ENCODE measurements at regions of chr4 and their contacts with region 1.

Region 1: DNA sequence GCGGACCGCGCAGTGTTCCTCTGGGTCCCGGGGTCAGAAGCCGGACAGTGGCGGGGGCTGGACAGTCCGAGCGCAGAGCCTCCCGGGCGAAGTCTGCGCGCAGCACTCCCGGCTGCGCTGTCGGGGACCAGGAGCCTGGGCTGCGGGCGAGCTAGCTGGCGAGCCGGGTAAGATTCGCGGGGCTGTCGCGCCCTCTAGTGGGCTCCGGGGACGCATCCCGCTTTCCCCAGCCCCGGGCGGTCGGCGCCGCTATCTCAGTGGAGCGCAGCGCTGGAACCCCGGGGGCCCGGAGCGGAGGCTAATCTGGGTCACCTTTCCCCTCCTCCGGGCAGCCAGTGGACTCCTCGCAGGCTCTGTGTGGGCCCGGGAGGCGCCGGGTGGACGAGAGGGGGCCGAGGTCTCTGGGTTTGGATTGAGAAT is 4.2 kb downstream of the PDGFRA start:
- DNase-seq: peak; percentile 83
- H3K4me3 Mint-ChIP-seq: peak overlapping the region; percentile 70
- H3K27ac Mint-ChIP-seq: no peak overlapping the region
- H3K4me1 Mint-ChIP-seq: peaks cover 11% of the 10 kb centered on the region
- H3K27me3 Mint-ChIP-seq: peaks cover 26% of the 10 kb centered on the region
- CTCF ChIP-seq: peak; percentile 74

Region 2: GRCh38 chr4:52545099-52546069 is 1687.9 kb before region 1 on chr4:
- CTCF ChIA-PET with region 1: interaction called, 4 read pairs
- POLR2A ChIA-PET with region 1: no interaction called
- intact Hi-C with region 1: loop called (anchors 2 kb)
- DNase-seq: peak; percentile 78
- H3K4me3 Mint-ChIP-seq: no peak overlapping the region
- H3K27ac Mint-ChIP-seq: no peak overlapping the region
- H3K4me1 Mint-ChIP-seq: no peaks in the 10 kb centered on the region
- H3K27me3 Mint-ChIP-seq: no peaks in the 10 kb centered on the region
- CTCF ChIP-seq: peak; percentile 89

Region 3: DNA sequence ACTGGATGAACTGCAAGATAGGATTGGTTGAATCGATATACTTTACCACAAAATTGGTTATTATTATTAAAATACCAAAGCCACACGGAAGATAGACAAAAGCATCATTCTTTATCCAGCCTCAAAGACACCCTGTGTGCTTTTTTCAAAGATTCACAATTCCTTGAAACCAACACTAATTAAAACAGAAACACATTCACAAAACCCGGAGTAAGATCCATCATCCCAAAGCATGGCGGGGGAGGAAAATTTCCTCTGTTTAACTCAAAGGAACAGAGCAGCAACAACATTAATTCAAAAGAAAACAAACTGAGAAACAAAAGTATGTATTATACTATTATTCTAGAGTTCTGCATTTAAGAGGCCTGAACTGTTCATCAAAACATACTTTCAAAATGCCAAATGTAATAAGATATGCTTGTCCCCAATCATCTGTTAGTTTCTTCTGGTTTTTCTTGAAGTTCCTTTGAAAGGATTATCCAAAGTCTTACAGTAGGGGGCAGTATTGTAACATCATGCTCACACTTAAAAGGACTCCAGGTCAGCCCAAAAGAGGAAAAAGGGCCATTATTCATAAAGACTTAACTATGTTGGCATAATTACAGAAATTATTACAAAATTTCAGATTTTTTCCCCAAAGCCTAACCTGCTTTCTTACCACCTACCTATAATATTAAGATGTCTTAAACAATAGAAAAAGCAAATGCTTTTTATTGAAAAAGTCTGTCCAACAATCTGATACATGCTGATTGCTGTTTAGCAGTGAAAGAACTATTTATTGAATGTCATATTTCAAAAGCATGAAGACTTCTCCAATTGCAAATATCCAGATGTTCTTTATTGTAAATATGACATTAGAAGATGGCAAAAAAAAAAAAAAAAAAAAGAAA is 1036.2 kb before region 1 on chr4:
- CTCF ChIA-PET with region 1: interaction called, 15 read pairs
- POLR2A ChIA-PET with region 1: no interaction called
- intact Hi-C with region 1: loop called (anchors 1 kb)
- DNase-seq: peak; percentile 79
- H3K4me3 Mint-ChIP-seq: no peak overlapping the region
- H3K27ac Mint-ChIP-seq: no peak overlapping the region
- H3K4me1 Mint-ChIP-seq: no peaks in the 10 kb centered on the region
- H3K27me3 Mint-ChIP-seq: no peaks in the 10 kb centered on the region
- CTCF ChIP-seq: peak; percentile 78

Region 4: GRCh38 chr4:53377319-53378170 is 855.7 kb before region 1 on chr4 and contains the start of gene FIP1L1:
- CTCF ChIA-PET with region 1: interaction called, 15 read pairs
- POLR2A ChIA-PET with region 1: no interaction called
- intact Hi-C with region 1: no loop called
- DNase-seq: peak; percentile 94
- H3K4me3 Mint-ChIP-seq: peak within 1 kb of the TSS; percentile 86
- H3K27ac Mint-ChIP-seq: peak within 1 kb of the TSS; percentile 94
- H3K4me1 Mint-ChIP-seq: peaks cover 17% of the 10 kb centered on the region
- H3K27me3 Mint-ChIP-seq: no peaks in the 10 kb centered on the region
- CTCF ChIP-seq: no peak
- total RNA-seq, gene FIP1L1: 93.3 and 103 TPM in 2 replicates

Region 5: DNA sequence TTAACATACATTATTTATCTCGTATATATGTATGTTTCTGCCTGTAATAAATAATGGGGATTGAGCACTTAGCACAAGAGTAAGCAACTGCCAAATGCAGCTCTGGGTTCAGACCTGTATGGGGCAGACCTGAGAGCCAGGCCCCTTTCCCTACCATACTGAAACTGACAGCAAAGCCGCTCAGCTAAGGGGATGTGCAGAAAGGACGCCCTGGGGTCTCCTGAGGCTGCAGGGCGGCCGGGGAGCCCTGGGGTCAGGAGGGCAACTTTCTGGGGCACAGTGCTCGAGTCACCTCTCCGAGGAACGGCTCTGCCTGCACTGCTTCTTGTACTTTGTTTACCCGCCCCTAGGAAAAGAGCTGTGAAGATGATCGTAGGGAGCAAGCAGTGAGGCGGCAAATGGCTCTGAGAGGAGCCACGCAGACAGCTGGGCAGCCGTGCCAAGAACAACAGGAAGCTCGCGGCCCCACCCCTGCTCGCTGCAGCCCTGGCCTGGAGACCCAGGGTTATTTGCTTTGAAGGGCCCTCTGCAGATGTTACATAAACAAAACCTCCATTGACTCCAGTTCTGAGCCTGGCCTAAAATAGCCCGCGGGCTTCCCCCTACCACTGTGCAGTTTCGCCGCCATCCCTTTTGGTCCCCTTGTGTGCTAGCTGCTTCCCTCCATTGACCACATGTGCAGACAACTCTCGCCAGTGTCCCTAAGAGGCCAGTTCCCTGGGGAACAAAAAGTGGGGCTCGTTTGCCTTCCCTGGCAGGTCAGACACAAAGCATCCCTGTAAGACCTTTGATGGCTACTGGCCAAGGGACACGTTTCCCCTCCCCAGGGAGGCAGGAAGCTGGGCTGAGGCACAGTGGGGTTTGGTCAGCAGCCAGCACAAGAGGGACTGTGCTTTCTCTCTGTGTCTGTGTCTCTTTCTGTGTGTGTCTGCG is 530.7 kb before region 1 on chr4:
- CTCF ChIA-PET with region 1: interaction called, 24 read pairs
- POLR2A ChIA-PET with region 1: no interaction called
- intact Hi-C with region 1: loop called (anchors 1 kb)
- DNase-seq: peak; percentile 92
- H3K4me3 Mint-ChIP-seq: peak overlapping the region; percentile 56
- H3K27ac Mint-ChIP-seq: peak overlapping the region; percentile 80
- H3K4me1 Mint-ChIP-seq: peaks cover 18% of the 10 kb centered on the region
- H3K27me3 Mint-ChIP-seq: no peaks in the 10 kb centered on the region
- CTCF ChIP-seq: no peak

Region 6: DNA sequence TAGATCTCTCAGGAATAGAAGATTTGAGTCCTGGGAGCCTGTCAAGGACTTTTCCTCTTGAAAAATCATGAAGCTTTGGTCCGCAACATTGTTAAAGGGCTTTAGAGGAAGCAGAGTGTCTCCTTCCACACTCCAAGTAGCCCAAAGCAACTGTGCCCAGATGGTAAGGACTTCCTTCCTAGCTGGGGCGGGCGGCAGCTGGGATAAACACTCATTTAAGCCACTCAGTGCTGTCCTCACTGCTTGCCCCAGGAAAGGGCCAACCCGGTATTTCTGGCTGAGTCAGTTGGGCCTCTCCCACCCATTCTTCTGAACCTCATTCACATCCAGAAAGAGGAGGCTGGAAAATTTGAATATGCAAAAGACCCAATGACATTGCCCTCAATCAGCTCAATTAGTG is 313.2 kb before region 1 on chr4:
- CTCF ChIA-PET with region 1: interaction called, 13 read pairs
- POLR2A ChIA-PET with region 1: no interaction called
- intact Hi-C with region 1: no loop called
- DNase-seq: no peak
- H3K4me3 Mint-ChIP-seq: no peak overlapping the region
- H3K27ac Mint-ChIP-seq: no peak overlapping the region
- H3K4me1 Mint-ChIP-seq: peaks cover 45% of the 10 kb centered on the region
- H3K27me3 Mint-ChIP-seq: no peaks in the 10 kb centered on the region
- CTCF ChIP-seq: no peak

Region 7: DNA sequence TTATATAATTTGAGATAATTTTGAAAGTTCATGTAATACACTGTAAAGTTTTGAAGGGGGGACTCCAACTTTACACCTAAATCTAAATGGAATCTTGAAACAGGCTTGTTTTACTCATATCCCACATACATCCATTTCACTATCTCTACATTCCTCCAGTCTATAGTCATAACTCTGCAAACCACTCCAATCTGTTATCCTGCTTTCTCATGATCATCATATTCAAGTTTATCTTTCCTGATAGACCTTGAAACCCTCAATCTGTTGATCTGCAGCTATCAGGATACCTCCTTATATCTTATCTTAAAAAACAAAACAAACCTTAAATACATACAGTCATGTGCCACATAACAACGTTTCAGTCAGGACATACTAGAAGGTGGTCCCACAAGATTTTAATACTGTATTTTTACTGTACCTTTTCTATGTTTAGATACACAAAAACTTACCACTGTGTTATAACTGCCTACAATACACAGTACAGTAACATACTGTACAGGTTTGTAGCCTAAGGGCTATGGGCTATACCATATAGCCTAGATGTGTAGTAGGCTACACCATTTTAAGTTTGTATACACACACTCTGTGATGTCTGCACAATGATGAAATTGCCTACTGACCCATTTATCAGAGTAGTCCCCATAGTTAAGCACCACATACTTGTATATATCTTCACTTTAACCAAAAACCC is 182.9 kb before region 1 on chr4:
- CTCF ChIA-PET with region 1: no interaction called
- POLR2A ChIA-PET with region 1: no interaction called
- intact Hi-C with region 1: no loop called
- DNase-seq: no peak
- H3K4me3 Mint-ChIP-seq: no peak overlapping the region
- H3K27ac Mint-ChIP-seq: no peak overlapping the region
- H3K4me1 Mint-ChIP-seq: peaks cover 41% of the 10 kb centered on the region
- H3K27me3 Mint-ChIP-seq: no peaks in the 10 kb centered on the region
- CTCF ChIP-seq: no peak

Region 8: DNA sequence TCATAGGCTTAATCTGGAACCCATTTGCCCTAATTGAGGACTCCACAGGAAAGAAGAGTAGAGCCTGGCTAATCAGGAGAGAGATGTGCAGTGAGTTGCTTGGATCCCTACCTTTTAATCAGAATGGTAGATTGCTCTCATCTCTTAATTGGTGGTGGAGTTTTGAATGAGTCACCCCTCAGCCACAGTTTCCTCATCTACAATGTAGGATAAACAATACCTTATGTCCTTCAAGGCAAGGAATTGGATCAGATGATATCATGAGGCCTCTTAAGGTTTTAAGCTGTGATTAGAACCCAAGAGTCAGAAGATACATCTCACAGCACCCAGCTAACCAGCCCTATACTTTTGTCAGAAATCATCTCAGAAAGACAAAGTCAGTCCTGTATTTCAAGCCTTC is 34.9 kb after region 1 on chr4:
- CTCF ChIA-PET with region 1: no interaction called
- POLR2A ChIA-PET with region 1: no interaction called
- intact Hi-C with region 1: no loop called
- DNase-seq: peak; percentile 32
- H3K4me3 Mint-ChIP-seq: no peak overlapping the region
- H3K27ac Mint-ChIP-seq: no peak overlapping the region
- H3K4me1 Mint-ChIP-seq: peaks cover 14% of the 10 kb centered on the region
- H3K27me3 Mint-ChIP-seq: no peaks in the 10 kb centered on the region
- CTCF ChIP-seq: no peak

Region 9: DNA sequence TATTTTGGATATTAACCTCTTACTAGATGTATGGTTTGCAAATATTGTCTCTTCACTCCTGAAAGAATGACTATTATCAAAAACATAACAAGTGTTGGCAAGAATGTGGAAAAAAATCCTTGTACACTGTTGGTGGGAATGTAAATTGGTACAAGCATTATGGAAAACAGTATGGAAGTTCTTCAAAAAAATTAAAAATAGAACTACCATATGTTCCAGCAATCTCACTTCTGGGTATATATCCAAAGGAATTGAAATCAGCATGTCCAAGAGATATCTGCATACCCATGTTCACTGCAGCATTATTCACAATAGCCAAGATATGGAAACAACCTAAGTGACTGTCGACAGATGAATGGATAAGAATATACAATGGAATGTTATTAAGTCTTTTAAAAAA is 362.9 kb after region 1 on chr4:
- CTCF ChIA-PET with region 1: no interaction called
- POLR2A ChIA-PET with region 1: no interaction called
- intact Hi-C with region 1: no loop called
- DNase-seq: no peak
- H3K4me3 Mint-ChIP-seq: no peak overlapping the region
- H3K27ac Mint-ChIP-seq: no peak overlapping the region
- H3K4me1 Mint-ChIP-seq: no peaks in the 10 kb centered on the region
- H3K27me3 Mint-ChIP-seq: no peaks in the 10 kb centered on the region
- CTCF ChIP-seq: no peak